ENCODE measurements at regions of chr17 and their contacts with region 1.

Region 1: GRCh38 chr17:8300627-8301242 is 5.5 kb upstream of the SLC25A35 start:
- DNase-seq: peak; percentile 32
- H3K4me3 ChIP-seq: no peak overlapping the region
- CTCF ChIP-seq: peak; percentile 89

Region 2: GRCh38 chr17:8118769-8119580 is 181.8 kb before region 1 on chr17:
- in situ Hi-C with region 1: loop called (anchors 25 kb)
- DNase-seq: no peak
- H3K4me3 ChIP-seq: peak overlapping the region; percentile 58
- CTCF ChIP-seq: peak; percentile 92

Region 3: DNA sequence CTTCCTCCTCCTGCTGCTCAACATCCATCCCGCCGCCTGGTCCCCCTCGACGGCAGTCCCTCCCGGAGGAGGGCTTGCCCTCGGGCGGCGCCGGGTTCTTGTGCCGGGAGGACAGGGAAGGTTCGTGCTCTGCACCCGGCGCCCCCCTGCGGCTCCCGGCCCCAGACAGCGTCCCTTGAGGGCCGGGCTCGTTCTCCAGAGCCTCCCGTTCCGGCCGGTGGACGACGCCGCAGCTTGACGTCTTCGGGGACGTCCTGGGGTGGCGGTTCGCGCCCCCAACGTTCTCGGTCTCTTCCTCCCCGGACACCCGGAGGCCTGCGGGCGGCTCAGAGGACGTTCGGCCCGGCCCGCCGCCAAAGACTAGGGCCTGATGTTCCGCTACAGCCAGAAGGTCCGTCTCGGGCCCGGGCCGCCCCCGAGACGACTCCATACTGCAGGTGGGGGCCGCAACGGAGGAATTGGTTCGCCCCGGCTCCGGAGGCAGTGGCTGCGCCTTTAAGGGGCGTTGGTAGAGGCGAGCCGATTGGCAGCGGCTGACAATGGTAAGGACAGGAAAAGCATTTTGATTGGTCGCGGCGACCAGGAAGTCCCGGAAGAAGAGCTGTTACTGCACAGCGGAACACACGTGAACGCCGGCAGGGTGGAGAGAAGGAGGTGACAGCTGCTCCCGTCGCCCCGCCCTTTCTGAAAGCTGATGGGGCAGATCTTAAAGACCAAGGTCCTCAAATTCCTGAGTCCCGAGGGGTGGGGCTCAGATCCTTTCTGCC is 110.8 kb before region 1 on chr17 and contains the start of gene BORCS6:
- in situ Hi-C with region 1: loop called (anchors 25 kb)
- DNase-seq: peak; percentile 95
- H3K4me3 ChIP-seq: peak within 1 kb of the TSS; percentile 96
- CTCF ChIP-seq: no peak

Region 4: DNA sequence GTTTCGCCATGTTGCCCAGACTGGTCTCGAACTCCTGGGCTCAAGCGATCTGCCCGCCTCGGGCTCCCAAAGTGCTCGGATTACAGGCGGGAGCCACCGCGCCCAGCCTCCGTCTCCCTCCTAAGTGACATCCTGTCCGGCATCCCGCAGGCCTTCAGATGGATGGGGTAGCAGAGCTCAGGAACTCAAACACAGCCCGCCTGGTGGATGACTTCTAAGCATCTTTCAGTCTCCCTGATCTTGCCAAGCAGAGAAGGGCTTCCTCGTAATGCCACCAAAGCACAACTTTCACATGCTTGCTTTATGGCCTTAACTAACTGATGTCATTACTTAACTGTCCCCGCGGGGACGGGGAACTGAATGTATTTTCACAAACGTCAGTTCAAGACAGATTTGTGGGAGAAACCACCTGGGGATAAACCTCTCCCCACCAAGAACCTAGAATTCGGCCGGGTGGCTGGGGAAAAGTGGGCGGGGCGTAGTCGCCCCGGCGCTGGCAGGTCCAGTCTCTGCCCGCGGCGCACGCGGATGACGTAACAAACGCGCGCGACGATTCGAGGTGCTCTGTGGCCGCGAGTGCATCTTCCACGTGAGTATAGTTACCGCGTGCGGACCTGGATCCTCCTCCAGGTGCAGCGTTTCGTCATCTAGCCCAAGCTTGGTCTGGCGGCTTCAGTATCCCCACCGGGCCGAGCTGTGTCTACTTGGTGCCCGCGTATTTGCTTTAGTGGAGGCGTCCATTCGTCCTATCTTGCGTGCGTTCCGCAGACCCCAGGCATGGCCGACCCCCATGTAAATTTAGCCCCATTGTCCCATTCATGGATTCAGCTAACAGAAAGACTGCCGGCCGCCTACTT is 51.8 kb before region 1 on chr17 and contains the start of gene PFAS:
- in situ Hi-C with region 1: loop called (anchors 10 kb)
- DNase-seq: peak; percentile 73
- H3K4me3 ChIP-seq: peak within 1 kb of the TSS; percentile 100
- CTCF ChIP-seq: no peak